Panc1 (cell line): ENCODE measurements at regions of chr12 and their contacts with region 1.

Region 1: GRCh38 chr12:30533558-30534265 is 162.0 kb downstream of the IPO8 start:
- DNase-seq: no peak
- ATAC-seq: no peak
- H3K4me3 ChIP-seq: no peak overlapping the region
- H3K27ac ChIP-seq: no peak overlapping the region
- H3K4me1 ChIP-seq: no peaks in the 10 kb centered on the region
- H3K27me3 ChIP-seq: peaks cover 5% of the 10 kb centered on the region
- CTCF ChIP-seq: no peak

Region 2: DNA sequence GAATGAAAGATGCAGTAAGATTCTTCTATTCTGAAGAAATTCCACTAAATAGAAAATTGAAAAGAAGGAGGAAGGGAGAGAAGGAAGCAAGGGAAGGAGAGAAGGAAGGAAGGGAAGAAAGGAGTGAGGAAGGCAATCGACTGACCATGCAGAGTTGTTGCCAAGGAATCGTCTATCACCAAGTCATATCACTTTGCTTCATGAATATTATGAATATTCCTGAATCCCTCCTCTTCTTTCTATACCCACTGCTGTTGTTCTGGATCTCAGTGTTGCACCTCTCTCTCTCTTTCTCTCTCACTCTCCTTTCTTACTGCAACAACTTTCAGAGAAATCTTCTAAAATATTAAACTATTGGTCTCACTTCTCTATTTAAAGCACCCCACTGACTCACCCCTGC is 60.4 kb before region 1 on chr12:
- CTCF ChIA-PET with region 1: no interaction called
- POLR2A ChIA-PET with region 1: no interaction called
- in situ Hi-C with region 1: no loop called
- intact Hi-C with region 1: loop called (anchors 10 kb)
- DNase-seq: no peak
- ATAC-seq: no peak
- H3K4me3 ChIP-seq: no peak overlapping the region
- H3K27ac ChIP-seq: no peak overlapping the region
- H3K4me1 ChIP-seq: no peaks in the 10 kb centered on the region
- H3K27me3 ChIP-seq: no peaks in the 10 kb centered on the region
- CTCF ChIP-seq: no peak